Activated CD8-positive, alpha-beta T cell treated with anti-CD3 and anti-CD28 coated beads for 36 hours (primary cell): ENCODE measurements at regions of chr17 and their contacts with region 1.

Region 1: GRCh38 chr17:35170968-35171771 is 23.0 kb downstream of the SLC35G3 start:
- DNase-seq: peak; percentile 31
- ATAC-seq: peak; percentile 83
- H3K4me3 Mint-ChIP-seq: peak overlapping the region; percentile 20
- H3K27ac Mint-ChIP-seq: peak overlapping the region; percentile 79
- H3K4me1 Mint-ChIP-seq: peaks cover 38% of the 10 kb centered on the region
- H3K27me3 Mint-ChIP-seq: no peaks in the 10 kb centered on the region
- CTCF ChIP-seq: peak; percentile 69

Region 2: DNA sequence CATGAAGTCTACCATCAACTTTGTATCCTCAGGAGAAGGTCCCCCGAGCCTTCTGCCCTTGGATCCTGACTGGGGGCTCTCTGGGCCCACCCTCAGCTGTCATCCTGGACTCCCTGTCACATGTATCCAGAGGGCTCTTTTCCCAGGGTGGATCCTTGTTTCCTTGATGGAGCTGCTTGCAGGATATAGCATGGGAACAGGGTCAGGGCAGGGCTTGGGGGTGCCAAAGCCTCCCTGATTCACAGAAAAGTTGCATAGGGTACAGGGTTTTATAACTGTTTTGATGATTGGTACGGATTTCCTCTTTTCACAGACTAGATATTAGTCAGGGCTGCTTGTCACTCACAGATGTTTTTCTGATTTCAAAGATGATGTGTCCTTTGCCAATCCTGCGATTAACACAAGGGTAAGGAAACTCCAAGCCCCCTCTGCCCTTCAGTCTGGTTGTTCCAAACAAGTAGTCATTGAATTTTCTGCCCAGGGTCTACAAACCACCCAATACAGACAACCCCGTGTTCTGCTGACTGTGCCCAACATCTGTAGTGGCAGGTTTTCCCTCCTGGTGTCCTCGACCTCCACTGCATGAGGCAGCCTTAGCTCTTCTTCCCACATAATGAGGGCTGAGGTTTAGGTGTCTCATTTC is 43.6 kb after region 1 on chr17:
- CTCF ChIA-PET with region 1: no interaction called
- POLR2A ChIA-PET with region 1: interaction called, 3 read pairs
- intact Hi-C with region 1: loop called (anchors 5 kb)
- DNase-seq: peak; percentile 60
- ATAC-seq: peak; percentile 65
- H3K4me3 Mint-ChIP-seq: peak overlapping the region; percentile 59
- H3K27ac Mint-ChIP-seq: peak overlapping the region; percentile 91
- H3K4me1 Mint-ChIP-seq: peaks cover 79% of the 10 kb centered on the region
- H3K27me3 Mint-ChIP-seq: no peaks in the 10 kb centered on the region
- CTCF ChIP-seq: no peak